Pancreas (tissue), 10 donors: ENCODE measurements at regions of chr17 and their contacts with region 1.

Region 1: DNA sequence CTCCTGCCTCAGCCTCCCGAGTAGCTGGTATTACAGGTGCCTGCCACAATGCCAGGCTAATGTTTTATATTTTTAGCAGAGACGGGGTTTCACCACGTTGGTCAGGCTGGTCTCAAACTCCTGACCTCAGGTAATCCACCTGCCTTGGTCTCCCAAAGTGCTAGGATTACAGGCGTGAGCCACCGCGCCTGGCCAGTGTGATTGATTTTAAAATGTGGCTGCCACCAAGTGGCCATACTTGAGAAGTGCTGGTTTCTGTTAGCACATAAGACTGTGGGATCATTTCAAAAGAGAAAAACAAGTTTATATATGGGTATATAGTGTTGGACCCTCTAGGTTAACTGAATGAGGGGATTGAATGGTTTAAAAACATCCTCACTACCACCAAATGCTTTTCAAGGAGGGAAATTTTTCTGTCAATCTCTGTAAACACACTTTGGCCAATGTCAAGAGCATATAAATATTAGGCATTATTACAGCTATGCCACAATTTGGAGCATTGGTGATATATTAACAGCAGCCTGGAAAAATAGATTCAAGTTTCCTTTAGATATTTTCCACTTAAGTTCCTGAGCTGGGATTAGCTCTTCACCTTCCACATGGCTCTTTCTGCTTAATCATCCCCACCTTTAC is 13.5 kb upstream of the DHRS13 start:
- DNase-seq: peak in 1 of 6 donors; percentile 52
- ATAC-seq: peak; percentile 59 to 85 (median 85)
- H3K4me3 ChIP-seq: no peak overlapping the region
- H3K27ac ChIP-seq: no peak overlapping the region
- H3K4me1 ChIP-seq: peaks cover 0 to 5% (median 0%) of the 10 kb centered on the region in 3 donors
- H3K27me3 ChIP-seq: no peaks in the 10 kb centered on the region
- CTCF ChIP-seq: peak; percentile 33 to 57 (median 39)

Region 2: GRCh38 chr17:28661635-28662537 is 254.5 kb before region 1 on chr17 and contains the starts of genes SDF2 and SUPT6H:
- intact Hi-C with region 1: loop called in 1 of 3 experiments (anchors 10 kb)
- DNase-seq: peak; percentile 84 to 92 (median 88)
- ATAC-seq: peak; percentile 94 to 98 (median 97)
- H3K4me3 ChIP-seq: peak within 1 kb of the TSS; percentile 67 to 83 (median 69)
- H3K27ac ChIP-seq: peak within 1 kb of the TSS; percentile 92 to 94 (median 93)
- H3K4me1 ChIP-seq: peaks cover 12 to 24% (median 17%) of the 10 kb centered on the region in 3 donors
- H3K27me3 ChIP-seq: no peaks in the 10 kb centered on the region
- CTCF ChIP-seq: no peak
- total RNA-seq, gene SDF2: 13.8 to 32.0 (median 18.7) TPM
- total RNA-seq, gene SUPT6H: 21.8 to 31.3 (median 26.4) TPM